ENCODE measurements at regions of chr17 and their contacts with region 1.

Region 1: GRCh38 chr17:79082311-79083190 is 7.9 kb downstream of the ENGASE start:
- DNase-seq: peak; percentile 27
- ATAC-seq: peak; percentile 71
- H3K4me3 ChIP-seq: no peak overlapping the region
- H3K27ac ChIP-seq: no peak overlapping the region
- H3K4me1 ChIP-seq: no peaks in the 10 kb centered on the region
- H3K27me3 ChIP-seq: no peaks in the 10 kb centered on the region
- CTCF ChIP-seq: peak; percentile 93
- EP300 ChIP-seq: no peak
- POLR2A ChIP-seq: no peak
- RAD21 ChIP-seq: peak; percentile 87

Region 2: DNA sequence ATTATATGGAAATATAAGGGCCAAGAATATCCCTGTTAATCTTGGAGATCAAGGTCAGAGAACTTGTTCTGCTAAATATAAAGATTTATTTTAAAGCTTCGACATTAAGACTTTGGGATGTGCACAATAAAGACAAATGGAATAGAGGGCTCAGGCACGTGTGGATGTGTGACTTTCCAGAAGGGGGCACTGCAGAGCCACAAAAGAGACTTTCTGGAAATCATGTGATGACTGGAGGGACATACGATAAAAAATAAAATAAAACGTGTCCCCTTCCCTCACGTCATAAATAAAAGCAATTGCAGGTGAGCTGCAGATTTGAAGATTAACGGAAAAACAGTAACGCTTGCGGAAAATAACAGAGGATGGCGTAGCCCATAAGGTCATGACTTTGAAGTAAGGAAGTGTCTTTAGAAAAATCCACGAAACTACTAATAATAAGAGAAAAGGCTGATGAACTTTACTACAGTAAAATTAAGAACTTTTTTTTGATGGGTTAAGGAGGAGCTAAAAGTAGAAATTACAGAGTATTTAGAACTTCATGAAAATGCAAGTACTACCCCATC is 17.4 kb before region 1 on chr17:
- CTCF ChIA-PET with region 1: interaction called, 22 read pairs
- POLR2A ChIA-PET with region 1: no interaction called
- in situ Hi-C with region 1: no loop called
- intact Hi-C with region 1: loop called (anchors 1 kb)
- DNase-seq: peak; percentile 43
- ATAC-seq: 0 out of 3 replicates have a peak, but pooled peaks have one; percentile 46
- H3K4me3 ChIP-seq: no peak overlapping the region
- H3K27ac ChIP-seq: no peak overlapping the region
- H3K4me1 ChIP-seq: no peaks in the 10 kb centered on the region
- H3K27me3 ChIP-seq: peaks cover 2 to 22% of the 10 kb centered on the region in 2 experiments; a peak in 3 of 5 replicates
- CTCF ChIP-seq: peak; percentile 71
- EP300 ChIP-seq: no peak
- POLR2A ChIP-seq: no peak
- RAD21 ChIP-seq: peak; percentile 43; the same call in 1 of the 2 replicates